ENCODE measurements at regions of chr5 and their contacts with region 1.

Region 1: DNA sequence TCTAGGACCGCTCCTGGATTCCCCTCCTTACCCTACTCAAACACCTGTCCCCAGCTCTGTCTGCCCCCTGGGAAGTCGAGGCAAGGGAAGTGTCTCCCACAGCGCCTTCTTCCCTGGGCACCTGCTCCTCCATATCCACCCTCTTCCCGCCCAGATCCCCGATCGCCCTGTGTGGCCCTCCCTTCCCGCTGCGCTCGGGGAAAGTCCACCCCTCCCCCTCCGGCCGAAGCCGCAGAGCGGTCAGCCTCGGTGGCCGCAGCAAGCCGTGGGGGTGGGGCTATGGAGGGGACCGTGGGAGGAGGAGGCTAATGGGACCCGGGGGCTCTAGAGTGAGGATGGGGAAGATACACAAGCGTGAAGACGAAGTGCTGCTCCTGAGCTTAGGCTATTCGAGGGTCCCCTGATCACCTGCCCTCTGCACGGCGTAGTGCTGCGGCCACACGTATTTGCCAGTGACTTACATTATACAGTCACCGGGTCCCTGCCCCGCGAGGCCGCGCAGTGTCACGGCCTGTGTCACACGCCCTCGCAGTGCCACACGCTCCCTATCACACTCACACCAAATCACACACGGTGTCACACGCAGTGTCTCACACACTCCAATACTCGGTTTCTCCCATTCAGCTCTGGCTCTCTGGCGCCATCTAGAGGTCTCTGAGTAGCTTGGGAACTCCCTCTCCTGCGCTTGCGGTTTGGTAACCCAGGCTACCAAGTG is 658 bp upstream of the PCDH1 start:
- DNase-seq: peak; percentile 91
- ATAC-seq: peak; percentile 88
- H3K4me3 Mint-ChIP-seq: peak overlapping the region; percentile 38
- H3K27ac Mint-ChIP-seq: peak overlapping the region; percentile 8
- H3K4me1 Mint-ChIP-seq: peaks cover 22% of the 10 kb centered on the region
- H3K27me3 Mint-ChIP-seq: peaks cover 88% of the 10 kb centered on the region

Region 2: GRCh38 chr5:141681695-141682641 is 196.9 kb before region 1 on chr5 and contains the start of gene ARAP3:
- CTCF ChIA-PET with region 1: interaction called, 12 read pairs
- DNase-seq: peak; percentile 62
- ATAC-seq: peak; percentile 88
- H3K4me3 Mint-ChIP-seq: peak within 1 kb of the TSS; percentile 75
- H3K27ac Mint-ChIP-seq: peak within 1 kb of the TSS; percentile 73
- H3K4me1 Mint-ChIP-seq: peaks cover 30% of the 10 kb centered on the region
- H3K27me3 Mint-ChIP-seq: no peaks in the 10 kb centered on the region
- total RNA-seq, gene ARAP3: 9.9 to 11.0 TPM

Region 3: DNA sequence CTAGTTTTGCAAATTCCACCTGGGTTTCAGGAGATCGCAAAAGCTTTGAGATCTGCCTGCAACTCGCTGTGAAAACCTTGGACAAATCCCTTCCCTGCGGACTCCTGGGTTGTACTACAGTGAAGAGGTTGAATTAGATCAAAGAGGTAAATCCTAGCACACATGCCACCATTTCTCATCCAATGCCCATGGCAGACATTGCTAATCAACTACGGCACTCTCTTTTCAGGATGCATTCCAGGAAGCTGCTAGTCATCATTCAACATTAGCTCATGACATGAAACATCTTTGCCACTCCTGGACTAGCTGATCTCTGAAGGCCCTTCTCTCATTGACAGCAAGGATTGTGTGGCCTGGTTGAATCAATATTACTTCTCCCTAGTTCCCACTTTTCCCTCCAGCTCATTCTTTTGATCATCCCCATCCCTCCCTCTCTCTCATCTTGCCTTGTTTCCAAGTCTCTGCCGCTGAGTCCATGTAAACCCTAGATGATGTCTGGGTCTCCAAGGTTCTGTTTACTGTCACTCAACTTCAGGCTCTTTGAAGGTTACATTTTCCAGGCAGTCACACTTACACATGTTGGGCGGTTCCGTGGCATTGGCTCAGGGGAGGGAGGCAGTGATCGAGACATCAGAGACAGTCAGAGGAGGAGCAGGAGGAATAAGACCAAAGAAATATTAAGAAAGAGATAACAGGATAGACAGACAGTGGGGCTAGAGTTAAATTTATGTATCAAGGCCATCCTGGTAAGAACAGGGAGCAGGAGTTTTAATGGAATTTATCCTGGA is 46.5 kb before region 1 on chr5:
- CTCF ChIA-PET with region 1: interaction called, 10 read pairs
- DNase-seq: no peak
- ATAC-seq: no peak
- H3K4me3 Mint-ChIP-seq: no peak overlapping the region
- H3K27ac Mint-ChIP-seq: no peak overlapping the region
- H3K4me1 Mint-ChIP-seq: peaks cover 5% of the 10 kb centered on the region
- H3K27me3 Mint-ChIP-seq: peaks cover 30% of the 10 kb centered on the region

Region 4: GRCh38 chr5:141914199-141914743 is 35.4 kb after region 1 on chr5:
- CTCF ChIA-PET with region 1: interaction called, 12 read pairs
- DNase-seq: no peak
- ATAC-seq: peak; percentile 74
- H3K4me3 Mint-ChIP-seq: no peak overlapping the region
- H3K27ac Mint-ChIP-seq: no peak overlapping the region
- H3K4me1 Mint-ChIP-seq: peaks cover 6% of the 10 kb centered on the region
- H3K27me3 Mint-ChIP-seq: peaks cover 49% of the 10 kb centered on the region

Region 5: DNA sequence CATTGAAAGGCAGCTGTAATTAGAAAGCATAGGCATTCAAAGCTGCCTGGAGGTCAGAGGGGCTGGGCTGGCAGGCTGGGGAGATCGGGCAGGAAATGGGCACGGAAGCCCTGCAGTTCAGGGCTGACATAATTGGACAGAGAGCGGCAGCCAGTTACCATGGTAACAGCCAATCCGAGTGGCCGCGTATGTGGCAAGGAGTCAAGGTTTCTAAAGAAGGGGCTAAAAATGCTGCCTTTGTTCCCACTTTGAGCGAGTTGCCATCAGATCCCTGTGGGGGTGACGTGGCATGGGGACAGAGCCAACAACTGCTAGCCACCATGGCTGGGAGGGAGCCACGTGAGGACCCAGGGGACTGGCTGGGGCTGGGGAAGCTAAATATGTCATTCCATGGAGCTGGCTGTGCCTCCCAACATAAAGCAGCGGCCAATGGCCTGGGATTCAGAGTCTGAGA is 185.0 kb after region 1 on chr5:
- CTCF ChIA-PET with region 1: no interaction called
- DNase-seq: peak; percentile 58
- ATAC-seq: peak; percentile 58
- H3K4me3 Mint-ChIP-seq: no peak overlapping the region
- H3K27ac Mint-ChIP-seq: no peak overlapping the region
- H3K4me1 Mint-ChIP-seq: peaks cover 9% of the 10 kb centered on the region
- H3K27me3 Mint-ChIP-seq: no peaks in the 10 kb centered on the region

Measured in activated CD8-positive, alpha-beta memory T cell treated with anti-CD3 and anti-CD28 coated beads, Interleukin-2, amount 10 ng/mL, durations not matched to agents 7 days and 5 days (primary cell).